ENCODE measurements at regions of chr3 and their contacts with region 1.

Region 1: DNA sequence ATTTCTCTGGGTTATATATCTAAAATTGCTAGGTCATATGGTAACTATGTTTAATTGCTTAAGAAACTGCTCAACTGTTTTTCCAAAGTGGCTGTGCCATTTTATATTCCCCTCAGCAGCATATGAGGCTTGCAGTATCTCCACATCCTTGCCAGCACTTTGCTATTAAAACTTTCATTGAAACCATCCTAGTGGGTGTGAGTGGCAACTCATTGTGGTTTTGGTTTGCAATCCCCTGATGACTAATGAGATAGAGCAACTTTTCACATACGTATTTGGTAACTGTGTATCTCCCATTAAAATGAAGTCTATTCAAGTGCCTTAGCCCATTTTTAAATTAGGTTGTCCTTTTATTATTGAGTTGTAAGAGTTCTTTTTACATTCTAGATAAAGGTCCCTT is 17.3 kb downstream of the KPNA1 start:
- DNase-seq: peak; percentile 94
- H3K4me3 Mint-ChIP-seq: no peak overlapping the region
- H3K27ac Mint-ChIP-seq: peak overlapping the region; percentile 97
- H3K4me1 Mint-ChIP-seq: peaks cover 52% of the 10 kb centered on the region
- H3K27me3 Mint-ChIP-seq: no peaks in the 10 kb centered on the region
- CTCF ChIP-seq: no peak

Region 2: DNA sequence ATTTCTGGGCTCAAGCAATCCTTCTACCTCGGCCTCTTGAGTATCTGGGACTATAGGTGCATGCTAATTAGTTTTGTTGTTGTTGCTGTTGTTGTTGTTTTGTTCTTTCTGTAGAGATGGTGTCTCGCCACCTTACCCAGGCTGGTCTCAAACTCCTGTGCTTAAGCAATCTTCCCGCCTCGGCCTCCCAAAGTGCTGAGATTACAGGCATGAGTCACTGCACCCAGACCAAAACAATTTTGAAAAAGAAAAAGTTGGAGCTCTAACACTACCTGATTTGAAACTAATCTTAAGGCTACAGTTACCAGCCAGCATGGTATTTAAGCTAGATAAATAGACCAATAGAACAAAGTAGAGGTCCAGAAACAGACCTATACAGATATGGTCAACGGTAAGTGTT is 12.4 kb before region 1 on chr3:
- CTCF ChIA-PET with region 1: interaction called, 10 read pairs
- POLR2A ChIA-PET with region 1: interaction called, 61 read pairs
- intact Hi-C with region 1: no loop called
- DNase-seq: peak; percentile 74
- H3K4me3 Mint-ChIP-seq: peak overlapping the region; percentile 47
- H3K27ac Mint-ChIP-seq: peak overlapping the region; percentile 86
- H3K4me1 Mint-ChIP-seq: peaks cover 31% of the 10 kb centered on the region
- H3K27me3 Mint-ChIP-seq: no peaks in the 10 kb centered on the region
- CTCF ChIP-seq: no peak

Region 3: DNA sequence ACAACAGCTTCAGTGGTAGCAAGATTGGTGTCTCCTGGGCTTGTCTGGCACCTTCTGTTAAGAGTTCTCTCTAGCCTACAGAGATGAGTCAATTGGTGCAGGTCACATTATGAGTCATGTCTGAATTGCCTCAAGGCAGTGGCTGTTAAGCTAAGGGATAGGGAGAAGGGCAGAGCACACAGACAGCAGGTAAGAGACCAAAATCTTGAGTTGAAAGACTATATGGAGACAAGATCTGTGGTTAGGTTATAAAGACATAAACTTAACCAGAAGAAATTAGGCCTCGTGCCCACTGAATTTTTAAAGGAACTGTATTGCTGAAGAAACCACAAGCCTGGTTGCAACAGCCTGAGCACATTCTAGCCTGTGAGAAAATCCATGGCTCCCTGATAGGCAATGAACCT is 36.5 kb after region 1 on chr3:
- CTCF ChIA-PET with region 1: no interaction called
- POLR2A ChIA-PET with region 1: interaction called, 16 read pairs
- intact Hi-C with region 1: no loop called
- DNase-seq: peak; percentile 98
- H3K4me3 Mint-ChIP-seq: no peak overlapping the region
- H3K27ac Mint-ChIP-seq: peak overlapping the region; percentile 21
- H3K4me1 Mint-ChIP-seq: peaks cover 28% of the 10 kb centered on the region
- H3K27me3 Mint-ChIP-seq: no peaks in the 10 kb centered on the region
- CTCF ChIP-seq: no peak

Measured in MCF 10A (cell line).